Activated CD4-positive, alpha-beta T cell treated with anti-CD3 and anti-CD28 coated beads for 36 hours (primary cell): ENCODE measurements at regions of chr6 and their contacts with region 1.

Region 1: DNA sequence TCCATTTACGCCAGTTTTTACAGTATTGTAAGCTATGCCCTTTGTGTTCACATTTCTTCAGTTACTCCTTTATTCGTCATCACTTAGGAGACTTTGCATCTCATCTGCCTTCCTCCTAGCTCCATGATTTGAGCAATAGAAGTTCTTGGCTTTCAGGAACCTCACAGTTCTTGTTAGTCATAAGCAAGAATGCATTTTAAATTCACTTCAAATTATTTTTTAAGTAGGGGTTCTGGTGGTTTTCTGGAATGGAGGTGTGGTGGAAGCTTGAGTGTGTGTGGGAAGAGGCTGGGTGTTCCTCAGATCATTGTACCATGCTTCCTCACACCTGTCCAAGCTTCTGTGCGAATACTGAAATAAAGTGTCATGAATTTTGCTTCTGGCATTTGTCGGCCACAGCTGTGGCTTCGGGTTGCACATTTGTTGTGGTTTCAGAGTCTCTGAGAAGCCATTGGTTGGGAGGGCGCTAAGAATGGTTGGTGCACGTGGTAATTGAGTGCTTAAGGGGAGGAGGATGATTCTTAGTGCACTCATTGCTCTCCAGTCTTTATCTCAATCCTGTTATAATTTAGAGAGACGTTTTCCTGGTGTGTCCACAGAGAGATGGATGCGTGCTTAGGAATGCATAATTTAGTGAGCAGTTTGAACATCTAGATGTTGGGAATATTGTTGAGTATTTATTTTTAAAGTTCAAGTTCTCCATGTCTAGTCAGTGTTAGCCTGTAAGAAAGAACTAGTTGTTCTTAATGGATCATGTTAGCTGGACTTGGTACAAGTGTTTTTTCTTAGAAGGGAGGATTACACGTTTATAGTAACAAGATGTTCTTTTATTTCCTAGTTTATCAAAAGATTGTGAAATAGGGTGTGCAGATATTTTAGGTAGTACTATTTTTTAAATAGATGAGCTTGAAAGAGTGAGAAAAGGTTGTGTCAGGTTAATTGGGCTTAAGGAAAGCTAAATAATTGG is 31.9 kb downstream of the FOXO3 start:
- DNase-seq: peak; percentile 66
- ATAC-seq: peak; percentile 86
- H3K4me3 Mint-ChIP-seq: no peak overlapping the region
- H3K27ac Mint-ChIP-seq: peak overlapping the region; percentile 43
- H3K4me1 Mint-ChIP-seq: peaks cover 54% of the 10 kb centered on the region
- H3K27me3 Mint-ChIP-seq: no peaks in the 10 kb centered on the region

Region 2: DNA sequence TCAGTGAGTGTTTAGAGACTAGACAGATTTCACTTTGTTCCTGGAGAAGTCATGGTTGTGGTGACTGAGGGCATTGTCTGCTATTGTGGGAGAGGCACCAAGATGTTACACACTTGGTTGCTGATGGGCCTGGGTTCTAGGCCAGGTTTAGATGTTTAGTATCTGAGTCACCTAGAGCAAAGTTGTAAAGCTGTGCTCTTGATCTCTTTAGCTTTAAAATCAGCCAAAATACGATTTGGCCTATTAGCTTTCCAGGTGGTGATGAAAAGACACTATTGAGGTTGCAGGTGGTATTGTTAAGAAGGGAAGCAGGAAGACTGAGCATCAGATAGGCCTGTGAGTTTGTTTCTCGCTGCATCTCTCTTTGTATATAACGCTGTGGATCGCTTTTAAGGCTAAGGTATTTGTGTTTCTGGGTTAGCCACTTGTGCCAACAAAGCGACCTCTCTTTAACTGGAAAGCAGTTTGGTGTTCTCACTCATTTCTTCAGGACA is 16.7 kb after region 1 on chr6:
- CTCF ChIA-PET with region 1: interaction called, 3 read pairs
- POLR2A ChIA-PET with region 1: no interaction called
- intact Hi-C with region 1: loop called in 1 of 2 experiments (anchors 1 kb)
- DNase-seq: no peak
- ATAC-seq: peak; percentile 26
- H3K4me3 Mint-ChIP-seq: no peak overlapping the region
- H3K27ac Mint-ChIP-seq: no peak overlapping the region
- H3K4me1 Mint-ChIP-seq: peaks cover 32% of the 10 kb centered on the region
- H3K27me3 Mint-ChIP-seq: no peaks in the 10 kb centered on the region